K562 (cell line): ENCODE measurements at regions of chr15 and their contacts with region 1.

Region 1: DNA sequence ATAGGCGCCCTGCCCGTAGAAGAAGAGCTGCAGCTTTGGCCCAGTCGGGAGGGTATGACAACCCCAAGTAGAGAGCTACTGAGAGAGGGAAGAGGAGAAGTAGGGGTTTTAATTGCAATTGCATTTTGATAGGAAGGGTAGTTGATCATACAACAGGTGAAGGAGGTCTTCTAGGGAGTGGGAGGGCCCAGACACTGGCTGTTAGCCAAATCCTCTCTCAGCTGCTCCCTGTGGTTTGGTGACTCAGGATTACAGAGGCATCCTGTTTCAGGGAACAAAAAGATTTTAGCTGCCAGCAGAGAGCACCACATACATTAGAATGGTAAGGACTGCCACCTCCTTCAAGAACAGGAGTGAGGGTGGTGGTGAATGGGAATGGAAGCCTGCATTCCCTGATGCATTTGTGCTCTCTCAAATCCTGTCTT is 408.9 kb upstream of the THBS1 start:
- DNase-seq: peak; percentile 17 to 76 (median 42)
- ATAC-seq: peak; percentile 95
- H3K4me3 ChIP-seq: no peak overlapping the region
- H3K27ac ChIP-seq: no peak overlapping the region
- H3K4me1 ChIP-seq: peaks cover 0 to 3% of the 10 kb centered on the region in 2 experiments; a peak in 1 of 5 replicates
- H3K27me3 ChIP-seq: peaks cover 6 to 7% of the 10 kb centered on the region in 2 experiments; a peak in 2 of 5 replicates
- CTCF ChIP-seq: peak; percentile 42 to 64 (median 48); a peak in 4 of 6 replicates
- EP300 ChIP-seq: peak; percentile 9; the same call in 1 of the 2 replicates
- POLR2A ChIP-seq: no peak
- RAD21 ChIP-seq: peak; percentile 74 to 82

Region 2: GRCh38 chr15:39125904-39126303 is 46.1 kb before region 1 on chr15:
- CTCF ChIA-PET with region 1: no interaction called
- POLR2A ChIA-PET with region 1: no interaction called
- in situ Hi-C with region 1: no loop called
- intact Hi-C with region 1: loop called (anchors 2 kb)
- DNase-seq: peak; percentile 61 to 70 (median 64)
- ATAC-seq: peak; percentile 71
- H3K4me3 ChIP-seq: no peak overlapping the region
- H3K27ac ChIP-seq: no peak overlapping the region
- H3K4me1 ChIP-seq: peaks cover 0 to 17% of the 10 kb centered on the region in 2 experiments; a peak in 3 of 5 replicates
- H3K27me3 ChIP-seq: peaks cover 11 to 15% of the 10 kb centered on the region in 2 experiments; a peak in 4 of 5 replicates
- CTCF ChIP-seq: peak; percentile 64 to 72 (median 68)
- EP300 ChIP-seq: no peak
- POLR2A ChIP-seq: no peak
- RAD21 ChIP-seq: peak; percentile 38 to 67; a peak in 3 of 4 replicates

Region 3: DNA sequence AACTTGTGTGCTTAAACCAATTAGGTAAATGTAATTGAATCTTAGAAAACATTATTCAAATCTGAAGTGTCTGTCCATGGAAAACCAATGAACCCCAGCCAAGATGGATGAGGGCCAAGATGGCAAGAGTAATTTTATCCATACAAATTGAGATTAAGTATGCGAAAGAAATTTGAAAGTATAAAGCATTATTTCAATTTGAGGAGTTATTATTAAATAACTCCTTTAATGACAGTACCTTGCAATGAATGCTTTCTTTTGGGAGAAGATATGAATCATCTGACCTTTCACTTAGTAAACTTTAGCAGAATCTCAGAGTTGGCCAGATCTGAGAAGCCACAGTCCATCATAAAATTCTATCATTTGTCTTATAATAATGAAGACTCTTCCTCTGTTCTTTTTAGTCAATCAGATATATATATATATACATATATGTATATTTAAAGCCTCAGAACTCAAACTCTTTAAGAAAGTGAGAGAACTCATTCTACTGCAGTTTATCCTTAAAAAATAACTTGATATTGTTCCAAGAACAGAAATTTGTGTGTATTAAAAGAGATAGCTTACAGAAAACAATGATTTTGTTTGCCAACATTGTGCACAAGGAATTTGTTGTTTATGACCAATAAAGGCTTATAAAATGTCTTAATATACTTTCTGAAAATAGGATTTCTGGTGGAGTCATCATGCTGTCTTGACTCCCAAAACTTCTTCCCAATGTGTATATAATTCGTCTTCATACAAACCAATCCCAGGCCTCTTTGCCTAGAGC is 25.9 kb before region 1 on chr15:
- CTCF ChIA-PET with region 1: no interaction called
- POLR2A ChIA-PET with region 1: no interaction called
- in situ Hi-C with region 1: no loop called
- intact Hi-C with region 1: no loop called
- DNase-seq: no peak
- ATAC-seq: no peak
- H3K4me3 ChIP-seq: no peak overlapping the region
- H3K27ac ChIP-seq: no peak overlapping the region
- H3K4me1 ChIP-seq: peaks cover under 1 to 8% of the 10 kb centered on the region in 2 experiments; a peak in 2 of 5 replicates
- H3K27me3 ChIP-seq: peaks cover 0 to 3% of the 10 kb centered on the region in 2 experiments; a peak in 1 of 5 replicates
- CTCF ChIP-seq: no peak
- EP300 ChIP-seq: no peak
- POLR2A ChIP-seq: no peak
- RAD21 ChIP-seq: no peak

Region 4: GRCh38 chr15:39191871-39192291 is 19.9 kb after region 1 on chr15:
- CTCF ChIA-PET with region 1: no interaction called
- POLR2A ChIA-PET with region 1: no interaction called
- in situ Hi-C with region 1: no loop called
- intact Hi-C with region 1: no loop called
- DNase-seq: no peak
- ATAC-seq: no peak
- H3K4me3 ChIP-seq: no peak overlapping the region
- H3K27ac ChIP-seq: no peak overlapping the region
- H3K4me1 ChIP-seq: no peaks in the 10 kb centered on the region
- H3K27me3 ChIP-seq: peaks cover 0 to 5% of the 10 kb centered on the region in 2 experiments; a peak in 3 of 5 replicates
- CTCF ChIP-seq: no peak
- EP300 ChIP-seq: no peak
- POLR2A ChIP-seq: no peak
- RAD21 ChIP-seq: no peak

Region 5: GRCh38 chr15:39429898-39430357 is 258.0 kb after region 1 on chr15:
- CTCF ChIA-PET with region 1: no interaction called
- POLR2A ChIA-PET with region 1: no interaction called
- in situ Hi-C with region 1: no loop called
- intact Hi-C with region 1: loop called (anchors 10 kb)
- DNase-seq: no peak
- ATAC-seq: no peak
- H3K4me3 ChIP-seq: no peak overlapping the region
- H3K27ac ChIP-seq: no peak overlapping the region
- H3K4me1 ChIP-seq: peaks cover 0 to 15% of the 10 kb centered on the region in 2 experiments; a peak in 4 of 5 replicates
- H3K27me3 ChIP-seq: peaks cover 0 to 4% of the 10 kb centered on the region in 2 experiments; a peak in 3 of 5 replicates
- CTCF ChIP-seq: no peak
- EP300 ChIP-seq: no peak
- POLR2A ChIP-seq: no peak
- RAD21 ChIP-seq: no peak

Region 6: DNA sequence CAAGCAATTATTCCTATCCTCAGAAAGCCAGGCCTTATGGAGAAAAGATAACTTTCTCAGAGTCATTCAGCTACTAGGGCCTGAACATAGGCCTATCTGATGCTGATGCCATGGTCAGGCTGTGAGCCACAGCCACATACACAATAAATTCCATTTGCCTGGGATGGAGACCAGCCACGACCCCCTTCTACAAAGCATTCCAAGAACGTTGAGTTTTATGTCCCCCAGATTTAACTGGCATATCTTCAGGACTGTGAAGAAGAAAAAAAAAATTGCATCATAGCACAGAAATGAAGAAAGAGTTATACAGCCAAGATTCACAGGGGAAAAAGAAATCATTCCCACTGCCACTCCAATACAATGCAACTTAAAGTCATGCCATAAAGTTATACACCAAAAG is 508.9 kb after region 1 on chr15:
- CTCF ChIA-PET with region 1: no interaction called
- POLR2A ChIA-PET with region 1: no interaction called
- in situ Hi-C with region 1: no loop called
- intact Hi-C with region 1: loop called (anchors 5 kb)
- DNase-seq: no peak
- ATAC-seq: no peak
- H3K4me3 ChIP-seq: no peak overlapping the region
- H3K27ac ChIP-seq: no peak overlapping the region
- H3K4me1 ChIP-seq: no peaks in the 10 kb centered on the region
- H3K27me3 ChIP-seq: no peaks in the 10 kb centered on the region
- CTCF ChIP-seq: no peak
- EP300 ChIP-seq: no peak
- POLR2A ChIP-seq: no peak
- RAD21 ChIP-seq: no peak

Region 7: DNA sequence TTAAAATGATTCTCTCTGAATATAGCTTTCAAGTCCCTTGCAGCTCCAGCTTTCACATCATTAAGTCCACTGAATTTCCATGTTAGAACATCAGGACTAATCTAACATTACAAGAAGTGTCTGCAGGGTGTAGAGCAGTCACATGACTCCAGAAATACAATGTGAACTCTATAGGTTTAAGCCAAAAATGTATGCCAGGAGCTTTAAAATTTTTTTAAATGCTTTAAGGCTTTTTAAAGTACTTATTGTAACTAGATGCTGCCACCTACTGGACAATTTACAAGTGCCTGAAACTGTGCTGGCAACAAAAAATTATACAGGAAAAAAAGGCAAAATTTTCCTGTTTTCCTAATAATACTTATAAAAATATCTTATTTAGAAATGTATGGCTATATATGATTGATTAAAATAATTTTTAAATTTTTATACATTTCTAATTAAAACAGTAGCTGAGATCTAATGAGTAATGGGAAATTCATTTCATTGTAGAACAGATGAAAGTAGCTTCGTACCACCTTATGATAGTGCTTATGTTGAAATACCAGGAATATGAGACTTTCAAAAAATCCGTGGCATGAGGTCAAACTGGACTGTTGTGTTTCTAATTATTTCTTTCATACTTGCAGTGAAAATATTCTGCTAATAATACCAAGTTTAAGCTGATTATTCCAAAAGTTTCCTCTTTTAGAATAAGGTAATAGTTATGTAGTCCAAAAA is 585.0 kb after region 1 on chr15:
- CTCF ChIA-PET with region 1: no interaction called
- POLR2A ChIA-PET with region 1: no interaction called
- in situ Hi-C with region 1: no loop called
- intact Hi-C with region 1: loop called (anchors 5 kb)
- DNase-seq: peak; percentile 22 to 70 (median 23)
- ATAC-seq: peak; percentile 59; the same call in 2 of the 3 replicates
- H3K4me3 ChIP-seq: no peak overlapping the region
- H3K27ac ChIP-seq: no peak overlapping the region
- H3K4me1 ChIP-seq: no peaks in the 10 kb centered on the region
- H3K27me3 ChIP-seq: no peaks in the 10 kb centered on the region
- CTCF ChIP-seq: peak; percentile 54 to 89 (median 63); a peak in 5 of 6 replicates
- EP300 ChIP-seq: no peak
- POLR2A ChIP-seq: no peak
- RAD21 ChIP-seq: peak; percentile 91 to 93